ENCODE measurements at regions of chr22 and their contacts with region 1.

Region 1: DNA sequence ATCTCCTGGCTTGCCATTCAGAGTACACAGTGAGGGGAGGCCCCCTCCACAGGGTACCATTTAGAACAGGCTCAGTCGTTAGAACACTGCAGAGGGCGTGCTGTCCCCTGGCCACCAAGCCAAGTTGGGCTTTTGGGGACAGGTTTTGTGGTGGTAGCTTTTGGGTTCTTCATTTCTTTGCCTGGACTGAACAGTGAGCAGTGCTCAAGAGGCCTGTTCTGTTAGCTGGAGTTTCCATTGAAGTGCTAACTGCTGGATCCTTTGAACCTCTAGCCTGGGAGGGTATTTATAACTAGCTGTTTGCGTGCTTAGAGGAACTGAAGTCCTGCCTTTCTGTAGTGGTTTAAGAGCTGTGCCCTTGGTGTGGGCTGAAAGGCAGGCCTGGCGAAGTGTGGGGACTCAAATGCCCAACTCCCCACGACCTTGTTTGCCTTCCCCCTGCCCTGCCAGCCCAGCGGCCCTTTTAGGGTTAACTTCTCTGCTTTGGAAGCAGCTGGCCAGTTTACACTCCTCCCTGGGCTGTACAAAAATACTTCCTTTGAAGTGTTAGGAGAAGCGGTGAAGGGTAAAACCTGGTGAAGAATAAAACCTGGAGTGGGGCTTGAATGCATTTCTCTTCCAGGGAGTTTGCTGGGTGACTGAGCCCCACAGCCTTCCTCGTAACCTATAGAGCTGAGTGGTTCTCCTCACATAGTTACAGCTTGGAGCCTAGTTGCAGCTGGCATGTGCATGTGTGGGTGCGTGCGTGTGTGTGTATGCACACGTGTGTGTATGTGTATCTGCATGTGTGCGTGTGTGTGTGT is 34.6 kb downstream of the ZNRF3 start:
- DNase-seq: no peak
- ATAC-seq: peak; percentile 79

Region 2: DNA sequence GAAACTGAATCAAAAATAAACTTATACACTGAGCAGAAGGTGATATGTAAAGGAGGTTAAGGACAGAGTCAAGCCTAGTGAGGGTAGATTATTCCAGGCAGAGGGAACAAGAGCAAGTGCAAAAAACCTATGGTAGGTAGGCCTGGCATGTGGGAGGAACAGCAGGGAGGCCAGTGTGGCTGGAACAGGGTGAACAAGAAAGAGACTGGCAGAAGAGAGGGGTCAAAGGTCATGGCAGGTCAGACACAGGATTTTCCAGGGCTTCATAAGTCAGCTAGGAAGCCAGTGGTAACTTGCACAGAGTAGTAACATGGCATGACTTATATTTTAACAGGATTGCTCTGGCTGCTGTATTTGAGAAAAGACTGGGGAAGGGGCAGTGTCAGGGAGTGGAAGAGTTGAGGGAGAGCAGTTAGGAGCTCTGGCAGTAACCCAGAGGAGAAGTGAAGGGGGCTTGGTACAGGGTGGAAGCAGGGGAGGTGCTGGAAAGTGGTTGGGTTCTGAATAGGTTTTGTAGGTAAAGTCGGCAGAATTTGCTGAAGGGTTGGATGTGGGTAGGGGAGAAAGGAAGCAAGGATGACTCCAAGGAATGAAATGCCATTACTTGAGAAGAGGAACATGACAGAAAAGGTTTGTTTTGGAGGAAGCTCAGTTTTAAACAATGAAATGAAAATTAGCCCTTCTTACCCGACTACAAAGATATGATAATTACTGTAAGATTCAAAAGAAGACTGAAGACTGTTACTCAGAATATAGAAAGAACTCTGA is 51.6 kb after region 1 on chr22:
- intact Hi-C with region 1: no loop called
- DNase-seq: no peak
- ATAC-seq: no peak

Region 3: GRCh38 chr22:29031227-29032011 is 113.5 kb after region 1 on chr22:
- intact Hi-C with region 1: loop called (anchors 1 kb)
- DNase-seq: no peak
- ATAC-seq: peak; percentile 58

Measured in Right ventricle myocardium inferior (tissue), 1 donor.